BJ (cell line): ENCODE measurements at regions of chr9 and their contacts with region 1.

Region 1: GRCh38 chr9:71748280-71748743 is 20.0 kb downstream of the CEMIP2 start:
- DNase-seq: no peak
- H3K4me3 ChIP-seq: no peak overlapping the region
- H3K27me3 ChIP-seq: no peaks in the 10 kb centered on the region
- CTCF ChIP-seq: no peak

Region 2: GRCh38 chr9:70418822-70419545 is 1329.3 kb before region 1 on chr9:
- CTCF ChIA-PET with region 1: no interaction called
- POLR2A ChIA-PET with region 1: interaction called, 18 read pairs
- DNase-seq: peak; percentile 93
- H3K4me3 ChIP-seq: peak overlapping the region; percentile 50
- H3K27me3 ChIP-seq: no peaks in the 10 kb centered on the region
- CTCF ChIP-seq: no peak

Region 3: DNA sequence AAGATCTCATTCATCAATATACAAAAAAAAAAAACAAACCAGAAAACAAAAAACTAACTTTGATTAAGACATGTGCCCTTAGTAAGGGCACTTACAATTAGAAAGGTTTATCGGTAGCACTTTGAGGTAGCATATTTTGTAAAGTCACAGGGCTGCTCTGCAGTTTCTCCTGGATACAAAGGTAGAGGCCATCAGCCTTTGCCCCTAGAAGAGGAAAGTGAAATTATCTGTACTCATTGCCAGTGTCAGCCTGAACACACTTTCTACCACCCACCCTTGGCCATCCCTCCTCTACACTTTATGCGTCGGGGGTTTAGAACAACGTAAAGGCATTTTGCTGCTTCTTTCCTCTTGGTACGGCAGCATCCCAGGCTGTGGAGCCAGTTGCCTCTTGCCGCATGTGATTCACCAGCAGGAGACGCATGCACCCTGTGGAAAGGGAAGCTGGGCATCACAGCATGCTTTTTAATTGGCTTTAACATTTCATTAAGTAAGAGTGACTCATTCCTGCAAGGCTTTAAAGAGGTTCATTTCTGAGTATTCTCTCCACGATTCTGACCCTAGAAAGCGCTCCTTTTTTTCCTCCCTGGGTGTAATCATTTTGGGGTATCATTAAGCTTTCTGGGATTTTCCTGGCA is 64.6 kb before region 1 on chr9:
- CTCF ChIA-PET with region 1: no interaction called
- POLR2A ChIA-PET with region 1: no interaction called
- DNase-seq: no peak
- H3K4me3 ChIP-seq: no peak overlapping the region
- H3K27me3 ChIP-seq: no peaks in the 10 kb centered on the region
- CTCF ChIP-seq: peak; percentile 72

Region 4: GRCh38 chr9:71966601-71967000 is 218.3 kb after region 1 on chr9:
- CTCF ChIA-PET with region 1: no interaction called
- POLR2A ChIA-PET with region 1: no interaction called
- DNase-seq: no peak
- H3K4me3 ChIP-seq: no peak overlapping the region
- H3K27me3 ChIP-seq: no peaks in the 10 kb centered on the region
- CTCF ChIP-seq: no peak